Activated CD4-positive, alpha-beta memory T cell treated with anti-CD3 and anti-CD28 coated beads for 36 hours (primary cell): ENCODE measurements at regions of chr20 and their contacts with region 1.

Region 1: GRCh38 chr20:33594743-33595142 is 67.4 kb upstream of the C20orf144 start:
- DNase-seq: no peak
- H3K4me3 Mint-ChIP-seq: no peak overlapping the region
- H3K27ac Mint-ChIP-seq: no peak overlapping the region
- H3K4me1 Mint-ChIP-seq: peaks cover 10% of the 10 kb centered on the region
- H3K27me3 Mint-ChIP-seq: no peaks in the 10 kb centered on the region

Region 2: DNA sequence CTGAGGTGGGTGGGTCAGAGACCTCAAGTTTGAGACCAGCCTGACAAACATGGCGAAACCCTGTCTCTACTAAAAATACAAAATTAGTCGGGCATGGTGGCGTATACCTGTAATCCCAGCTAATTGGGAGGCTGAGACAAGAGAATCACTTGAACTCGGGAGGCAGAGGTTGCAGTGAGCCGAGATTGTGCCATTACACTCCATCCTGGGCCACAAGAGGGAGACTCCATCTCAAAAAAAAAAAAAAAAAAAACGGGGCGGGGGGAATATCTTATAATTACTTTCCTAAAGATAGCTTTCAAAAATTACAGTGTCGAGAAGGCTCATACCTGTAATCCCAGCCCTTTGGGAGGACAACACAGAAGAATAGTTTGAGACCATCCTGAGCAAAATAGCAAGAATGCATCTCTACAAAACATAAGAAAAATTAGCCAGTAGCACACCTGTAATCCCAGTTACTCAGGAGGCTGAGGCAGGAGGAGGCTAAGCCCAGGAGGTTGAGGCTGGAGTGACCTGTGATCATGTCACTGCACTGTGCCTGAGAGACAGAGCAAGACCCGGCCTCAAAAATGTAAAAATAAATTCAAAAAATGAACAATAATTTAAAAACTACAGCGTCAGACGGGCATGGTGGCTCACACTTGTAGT is 79.0 kb before region 1 on chr20:
- CTCF ChIA-PET with region 1: no interaction called
- POLR2A ChIA-PET with region 1: no interaction called
- intact Hi-C with region 1: loop called (anchors 10 kb)
- DNase-seq: no peak
- H3K4me3 Mint-ChIP-seq: no peak overlapping the region
- H3K27ac Mint-ChIP-seq: no peak overlapping the region
- H3K4me1 Mint-ChIP-seq: peaks cover 13% of the 10 kb centered on the region
- H3K27me3 Mint-ChIP-seq: no peaks in the 10 kb centered on the region